ENCODE measurements at regions of chr12 and their contacts with region 1.

Region 1: DNA sequence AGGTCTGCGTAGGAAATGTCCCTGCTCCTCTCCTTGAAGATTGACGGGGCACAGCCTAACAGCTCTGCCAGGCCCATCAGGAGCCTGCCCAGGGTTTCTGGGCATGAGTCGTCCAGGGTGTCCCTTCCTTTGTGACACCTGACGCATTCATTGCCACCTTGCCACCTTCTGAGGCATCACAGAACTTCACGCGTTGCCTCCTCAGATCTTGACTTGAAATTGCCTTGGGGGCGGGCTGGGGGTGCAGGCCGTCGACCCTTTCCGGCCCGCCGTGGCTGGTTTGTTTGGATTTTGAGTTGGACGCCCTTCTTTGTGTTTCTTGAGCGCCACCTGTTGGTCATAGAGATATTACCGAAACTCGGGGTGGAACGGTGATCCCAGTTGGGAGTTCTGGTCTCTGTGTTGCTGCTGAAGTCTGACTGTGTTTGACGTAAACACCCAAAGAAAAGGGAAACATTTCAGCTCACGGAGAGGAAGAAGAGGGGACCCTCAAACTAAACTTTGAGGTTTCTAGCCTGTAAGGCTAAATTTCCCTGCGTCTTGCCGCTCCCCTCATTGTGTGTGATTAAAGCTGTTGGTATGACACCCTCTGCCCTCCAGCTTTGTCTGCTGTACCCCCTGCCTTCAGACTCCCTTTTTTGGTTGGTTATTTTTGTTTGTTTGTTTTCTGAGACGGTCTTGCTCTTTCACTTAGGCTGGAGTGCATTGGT is 44.6 kb downstream of the MLXIP start:
- DNase-seq: no peak
- H3K4me3 ChIP-seq: peak overlapping the region in 1 of 2 donors; percentile 35
- H3K27ac ChIP-seq: peak overlapping the region; percentile 59
- H3K4me1 ChIP-seq: peaks cover 39% of the 10 kb centered on the region
- H3K27me3 ChIP-seq: no peaks in the 10 kb centered on the region
- CTCF ChIP-seq: peak; percentile 58 to 88 (median 72)
- POLR2A ChIP-seq: no peak

Region 2: GRCh38 chr12:122054842-122055520 is 68.2 kb before region 1 on chr12:
- intact Hi-C with region 1: loop called (anchors 2 kb)
- DNase-seq: no peak
- H3K4me3 ChIP-seq: no peak overlapping the region
- H3K27ac ChIP-seq: no peak overlapping the region
- H3K4me1 ChIP-seq: peaks cover 14% of the 10 kb centered on the region
- H3K27me3 ChIP-seq: no peaks in the 10 kb centered on the region
- CTCF ChIP-seq: no peak
- POLR2A ChIP-seq: no peak

Measured in vagina (tissue), 2 donors.